ENCODE measurements at regions of chr1 and their contacts with region 1.

Region 1: GRCh38 chr1:27662707-27663393 is 9.1 kb downstream of the IFI6 start:
- DNase-seq: peak; percentile 65 to 95 (median 85)
- ATAC-seq: peak; percentile 66 to 85 (median 82)
- H3K4me3 ChIP-seq: peak overlapping the region; percentile 39 to 42
- H3K4me3 Mint-ChIP-seq: peak overlapping the region; percentile 75 to 84 (median 79)
- H3K27ac ChIP-seq: peak overlapping the region; percentile 90
- H3K27ac Mint-ChIP-seq: peak overlapping the region; percentile 98 to 99
- H3K4me1 ChIP-seq: peaks cover 22 to 54% of the 10 kb centered on the region in 2 experiments
- H3K4me1 Mint-ChIP-seq: peaks cover 48 to 53% (median 50%) of the 10 kb centered on the region in 3 donors
- H3K27me3 ChIP-seq: no peaks in the 10 kb centered on the region
- H3K27me3 Mint-ChIP-seq: no peaks in the 10 kb centered on the region

Region 2: GRCh38 chr1:27556781-27557595 is 105.9 kb before region 1 on chr1:
- CTCF ChIA-PET with region 1: interaction called, 7 to 13 read pairs
- POLR2A ChIA-PET with region 1: no interaction called
- DNase-seq: peak; percentile 28 to 85 (median 61)
- ATAC-seq: peak; percentile 73 to 83 (median 78)
- H3K4me3 ChIP-seq: no peak overlapping the region
- H3K4me3 Mint-ChIP-seq: peak overlapping the region in 1 of 3 donors; percentile 76
- H3K27ac ChIP-seq: no peak overlapping the region
- H3K27ac Mint-ChIP-seq: peak overlapping the region; percentile 71 to 80
- H3K4me1 ChIP-seq: peaks cover 14 to 32% of the 10 kb centered on the region in 2 experiments
- H3K4me1 Mint-ChIP-seq: peaks cover 34 to 52% (median 42%) of the 10 kb centered on the region in 3 donors
- H3K27me3 ChIP-seq: no peaks in the 10 kb centered on the region
- H3K27me3 Mint-ChIP-seq: no peaks in the 10 kb centered on the region

Region 3: GRCh38 chr1:27600498-27601175 is 62.2 kb before region 1 on chr1:
- CTCF ChIA-PET with region 1: interaction called in 1 of 2 experiments, 14 read pairs
- POLR2A ChIA-PET with region 1: interaction called in 1 of 2 experiments, 3 read pairs
- DNase-seq: no peak
- ATAC-seq: no peak
- H3K4me3 ChIP-seq: no peak overlapping the region
- H3K4me3 Mint-ChIP-seq: peak overlapping the region in 2 of 3 donors; percentile 49 to 91
- H3K27ac ChIP-seq: no peak overlapping the region
- H3K27ac Mint-ChIP-seq: peak overlapping the region in 1 of 2 donors; percentile 31
- H3K4me1 ChIP-seq: peaks cover 50 to 77% of the 10 kb centered on the region in 2 experiments
- H3K4me1 Mint-ChIP-seq: peaks cover 36 to 51% (median 38%) of the 10 kb centered on the region in 3 donors
- H3K27me3 ChIP-seq: no peaks in the 10 kb centered on the region
- H3K27me3 Mint-ChIP-seq: no peaks in the 10 kb centered on the region

Region 4: GRCh38 chr1:27618341-27619082 is 44.3 kb before region 1 on chr1:
- CTCF ChIA-PET with region 1: interaction called, 4 to 12 read pairs
- POLR2A ChIA-PET with region 1: no interaction called
- DNase-seq: peak in 30 of 35 experiments; percentile 12 to 78 (median 48)
- ATAC-seq: peak; percentile 93 to 99 (median 96)
- H3K4me3 ChIP-seq: no peak overlapping the region
- H3K4me3 Mint-ChIP-seq: peak overlapping the region in 2 of 3 donors; percentile 7 to 37
- H3K27ac ChIP-seq: peak overlapping the region; percentile 74
- H3K27ac Mint-ChIP-seq: peak overlapping the region; percentile 94 to 97
- H3K4me1 ChIP-seq: peaks cover 46 to 86% of the 10 kb centered on the region in 2 experiments
- H3K4me1 Mint-ChIP-seq: peaks cover 58 to 65% (median 63%) of the 10 kb centered on the region in 3 donors
- H3K27me3 ChIP-seq: no peaks in the 10 kb centered on the region
- H3K27me3 Mint-ChIP-seq: no peaks in the 10 kb centered on the region

Region 5: GRCh38 chr1:27713139-27713725 is 50.4 kb after region 1 on chr1:
- CTCF ChIA-PET with region 1: no interaction called
- POLR2A ChIA-PET with region 1: no interaction called
- DNase-seq: no peak
- ATAC-seq: no peak
- H3K4me3 ChIP-seq: no peak overlapping the region
- H3K4me3 Mint-ChIP-seq: no peak overlapping the region
- H3K27ac ChIP-seq: no peak overlapping the region
- H3K27ac Mint-ChIP-seq: no peak overlapping the region
- H3K4me1 ChIP-seq: no peaks in the 10 kb centered on the region
- H3K4me1 Mint-ChIP-seq: peaks cover 0 to 1% (median 0%) of the 10 kb centered on the region in 3 donors
- H3K27me3 ChIP-seq: peaks cover 0 to 6% of the 10 kb centered on the region in 2 experiments
- H3K27me3 Mint-ChIP-seq: peaks cover 16 to 18% of the 10 kb centered on the region in 2 donors

Region 6: GRCh38 chr1:27725374-27726173 is 62.7 kb after region 1 on chr1 and contains the start of gene FAM76A:
- CTCF ChIA-PET with region 1: interaction called, 7 to 10 read pairs
- POLR2A ChIA-PET with region 1: interaction called in 1 of 2 experiments, 6 read pairs
- DNase-seq: peak; percentile 98 to 100 (median 99)
- ATAC-seq: peak; percentile 91 to 97 (median 94)
- H3K4me3 ChIP-seq: peak within 1 kb of the TSS; percentile 72 to 81
- H3K4me3 Mint-ChIP-seq: peak within 1 kb of the TSS; percentile 84 to 87 (median 87)
- H3K27ac ChIP-seq: peak within 1 kb of the TSS; percentile 85
- H3K27ac Mint-ChIP-seq: peak within 1 kb of the TSS; percentile 95 to 96
- H3K4me1 ChIP-seq: peaks cover 4 to 17% of the 10 kb centered on the region in 2 experiments
- H3K4me1 Mint-ChIP-seq: peaks cover 23 to 28% (median 26%) of the 10 kb centered on the region in 3 donors
- H3K27me3 ChIP-seq: no peaks in the 10 kb centered on the region
- H3K27me3 Mint-ChIP-seq: no peaks in the 10 kb centered on the region
- total RNA-seq, gene FAM76A: 18.1 to 23.4 (median 21.2) TPM